Activated T-helper 2 cell treated with anti-CD3 and anti-CD28 coated beads, Interferon-gamma antibody, Interleukin-2, Interleukin-4, amounts not matched to agents 10 μg/mL and 5 μg/mL and 100 μg/mL, durations not matched to agents 14 hours and 24 hours and 36 hours (primary cell): ENCODE measurements at regions of chr9 and their contacts with region 1.

Region 1: DNA sequence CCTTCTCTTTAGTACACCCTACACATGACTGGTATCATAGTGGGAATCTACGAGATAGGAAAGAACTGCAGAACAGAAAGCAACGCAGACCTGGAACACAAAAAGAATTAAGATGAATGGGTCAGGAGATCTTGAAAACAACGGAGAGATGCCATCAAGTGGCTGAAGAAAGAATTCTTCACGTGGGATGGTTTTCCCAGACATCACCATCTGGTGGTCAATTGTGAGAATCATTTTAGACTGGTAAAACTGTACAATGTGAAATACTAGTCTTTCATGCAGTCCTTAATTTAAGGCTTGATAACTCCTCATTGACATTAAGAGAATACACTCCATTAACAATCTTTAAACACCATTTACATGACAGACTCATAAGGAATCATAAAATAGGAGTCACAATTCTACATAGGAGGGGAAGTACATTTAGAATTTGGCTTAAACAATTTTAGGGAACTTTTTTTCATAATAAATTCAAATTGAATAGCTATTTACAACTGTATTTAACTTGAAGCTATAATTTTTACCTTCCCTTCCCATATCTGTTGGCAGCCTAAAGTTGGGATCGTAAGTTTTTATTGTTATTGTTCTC is 128.4 kb upstream of the TRPM3 start:
- DNase-seq: no peak
- H3K4me3 Mint-ChIP-seq: no peak overlapping the region
- H3K27ac Mint-ChIP-seq: no peak overlapping the region
- H3K4me1 Mint-ChIP-seq: no peaks in the 10 kb centered on the region
- H3K27me3 Mint-ChIP-seq: no peaks in the 10 kb centered on the region

Region 2: GRCh38 chr9:70924895-70925547 is 324.8 kb before region 1 on chr9:
- intact Hi-C with region 1: loop called (anchors 10 kb)
- DNase-seq: no peak
- H3K4me3 Mint-ChIP-seq: no peak overlapping the region
- H3K27ac Mint-ChIP-seq: no peak overlapping the region
- H3K4me1 Mint-ChIP-seq: no peaks in the 10 kb centered on the region
- H3K27me3 Mint-ChIP-seq: no peaks in the 10 kb centered on the region

Region 3: GRCh38 chr9:70987986-70988385 is 261.8 kb before region 1 on chr9:
- intact Hi-C with region 1: no loop called
- DNase-seq: no peak
- H3K4me3 Mint-ChIP-seq: no peak overlapping the region
- H3K27ac Mint-ChIP-seq: no peak overlapping the region
- H3K4me1 Mint-ChIP-seq: no peaks in the 10 kb centered on the region
- H3K27me3 Mint-ChIP-seq: no peaks in the 10 kb centered on the region

Region 4: DNA sequence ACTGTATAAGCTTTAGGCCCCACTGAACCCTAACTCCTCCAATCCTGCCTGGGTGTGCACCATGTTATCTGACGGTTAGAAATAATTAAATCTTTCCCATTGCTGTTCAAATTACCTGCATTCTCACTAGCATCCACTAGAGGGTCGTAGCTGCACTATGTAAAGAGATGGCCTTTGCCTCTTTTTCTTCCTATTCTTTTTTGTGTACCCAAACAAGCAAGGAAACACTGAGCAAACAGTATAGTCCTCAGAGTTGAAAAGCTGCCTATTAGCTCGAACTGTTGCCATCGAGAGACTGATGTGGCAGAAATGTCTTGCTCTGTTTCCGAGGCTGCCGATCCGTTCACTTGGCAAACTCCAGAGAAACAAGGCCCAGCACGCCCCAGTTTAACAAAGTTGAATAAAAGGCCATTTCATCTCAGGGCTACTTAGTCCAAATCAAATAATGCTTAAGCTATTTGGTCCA is 35.4 kb after region 1 on chr9:
- intact Hi-C with region 1: no loop called
- DNase-seq: no peak
- H3K4me3 Mint-ChIP-seq: no peak overlapping the region
- H3K27ac Mint-ChIP-seq: no peak overlapping the region
- H3K4me1 Mint-ChIP-seq: no peaks in the 10 kb centered on the region
- H3K27me3 Mint-ChIP-seq: no peaks in the 10 kb centered on the region